ENCODE measurements at regions of chr1 and their contacts with region 1.

Region 1: GRCh38 chr1:119662034-119662437 is 14.0 kb upstream of the ZNF697 start:
- DNase-seq: no peak
- H3K4me3 ChIP-seq: no peak overlapping the region
- H3K27ac ChIP-seq: no peak overlapping the region
- H3K4me1 ChIP-seq: peaks cover 7% of the 10 kb centered on the region
- H3K27me3 ChIP-seq: no peaks in the 10 kb centered on the region
- CTCF ChIP-seq: no peak
- POLR2A ChIP-seq: no peak

Region 2: GRCh38 chr1:119225831-119226230 is 436.2 kb before region 1 on chr1:
- intact Hi-C with region 1: no loop called
- DNase-seq: no peak
- H3K4me3 ChIP-seq: no peak overlapping the region
- H3K27ac ChIP-seq: no peak overlapping the region
- H3K4me1 ChIP-seq: no peaks in the 10 kb centered on the region
- H3K27me3 ChIP-seq: no peaks in the 10 kb centered on the region
- CTCF ChIP-seq: no peak
- POLR2A ChIP-seq: no peak

Region 3: DNA sequence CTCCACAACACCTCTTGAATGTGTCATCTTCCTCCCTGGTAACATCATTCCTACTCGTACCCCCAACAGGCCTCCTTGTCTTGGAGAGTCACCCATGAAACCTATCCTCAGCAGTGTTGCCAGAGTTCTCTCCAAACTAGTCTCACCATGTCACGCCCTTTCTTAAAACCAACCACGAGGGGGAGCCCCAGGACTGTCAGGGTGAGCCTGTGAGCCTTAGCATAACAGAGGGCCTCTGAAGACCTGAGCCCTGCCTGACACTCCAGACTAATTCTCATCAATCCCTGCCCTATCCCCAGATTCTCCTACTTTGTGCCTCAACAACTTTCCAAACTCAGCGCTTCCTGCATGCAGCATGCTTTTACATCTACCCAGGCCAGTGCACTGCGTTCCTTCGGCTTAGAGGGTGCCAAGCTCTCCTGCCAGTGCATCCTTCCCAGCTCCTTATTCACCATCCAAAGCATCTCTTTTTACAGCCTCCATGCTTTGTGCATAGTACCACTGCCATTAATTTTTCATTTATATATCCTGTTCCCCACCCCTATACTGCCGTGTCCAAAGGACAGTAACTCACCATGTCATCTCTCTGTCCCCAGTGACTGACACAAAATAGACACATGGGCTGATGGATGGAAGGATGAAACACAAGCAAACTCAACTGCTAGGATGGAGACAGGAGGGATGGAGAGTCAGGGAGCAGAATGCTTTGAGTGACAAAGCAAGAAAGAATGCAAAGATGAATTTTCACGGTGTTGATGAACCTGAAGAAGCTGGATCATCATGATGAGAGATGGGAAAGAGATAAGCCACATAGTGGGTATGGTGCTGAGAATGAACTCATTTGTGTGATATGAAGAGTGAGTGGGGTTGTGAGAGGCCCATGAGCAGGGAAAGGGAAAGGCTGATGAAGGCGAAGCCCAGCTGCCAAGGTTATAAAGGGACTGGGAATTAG is 48.0 kb before region 1 on chr1:
- intact Hi-C with region 1: loop called (anchors 5 kb)
- DNase-seq: peak; percentile 89
- H3K4me3 ChIP-seq: no peak overlapping the region
- H3K27ac ChIP-seq: no peak overlapping the region
- H3K4me1 ChIP-seq: peaks cover 23% of the 10 kb centered on the region
- H3K27me3 ChIP-seq: no peaks in the 10 kb centered on the region
- CTCF ChIP-seq: peak; percentile 52 to 77 (median 76)
- POLR2A ChIP-seq: no peak

Measured in testis (tissue), 5 donors.